ENCODE measurements at regions of chr2 and their contacts with region 1.

Region 1: DNA sequence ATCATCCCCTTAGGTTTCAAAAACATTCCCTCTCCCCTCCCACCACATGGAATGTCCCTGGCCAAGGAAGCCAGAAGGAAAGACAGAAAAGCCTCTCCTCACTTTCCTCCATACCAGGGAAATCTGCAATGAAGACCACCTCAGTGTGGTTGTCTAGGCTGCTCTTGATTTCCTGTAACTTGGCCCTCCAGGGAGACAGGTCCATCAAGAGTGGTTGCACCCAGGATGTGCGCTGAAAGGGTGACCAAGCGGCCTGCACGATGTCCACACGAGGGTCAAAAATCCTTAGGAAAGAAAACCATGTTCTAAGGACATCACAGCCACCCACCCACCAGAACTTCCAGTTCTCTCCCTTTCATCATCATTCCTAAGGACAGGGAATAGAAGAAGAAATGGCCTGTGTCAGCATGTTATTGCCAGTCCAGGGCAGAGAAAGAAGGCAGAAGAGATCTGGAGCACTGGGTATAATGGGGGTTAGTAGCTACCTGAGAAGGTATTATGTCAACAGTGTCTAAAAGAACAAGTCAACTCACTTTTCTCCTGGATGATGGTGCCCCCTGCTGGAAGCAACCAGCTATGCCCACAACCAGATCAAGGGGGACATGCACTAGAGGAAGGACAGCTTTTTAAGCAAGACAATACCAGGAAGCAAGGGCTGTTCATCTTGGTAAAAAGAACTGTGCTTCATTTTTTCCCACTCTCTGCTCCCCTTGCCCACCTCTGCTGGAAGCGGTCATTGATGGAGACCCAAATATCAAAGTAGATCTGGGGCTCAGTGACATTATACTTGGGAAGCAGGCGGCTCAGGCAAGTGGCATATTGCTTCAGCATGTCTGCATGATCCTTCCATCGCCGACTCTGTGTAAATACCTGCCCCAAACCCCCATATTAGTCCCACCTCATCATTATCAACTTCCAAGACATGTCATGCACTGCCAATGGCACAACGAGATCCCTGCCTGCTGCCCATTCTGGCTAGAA is 9.3 kb downstream of the GGCX start:
- DNase-seq: peak in 1 of 2 experiments; percentile 87
- ATAC-seq: peak; percentile 52 to 64
- H3K4me3 ChIP-seq: no peak overlapping the region
- H3K27ac ChIP-seq: peak overlapping the region; percentile 34 to 45; a peak in 5 of 6 replicates
- H3K4me1 ChIP-seq: peaks cover 10% of the 10 kb centered on the region
- CTCF ChIP-seq: peak; percentile 98
- EP300 ChIP-seq: no peak
- POLR2A ChIP-seq: no peak
- RAD21 ChIP-seq: peak; percentile 99 to 100

Region 2: DNA sequence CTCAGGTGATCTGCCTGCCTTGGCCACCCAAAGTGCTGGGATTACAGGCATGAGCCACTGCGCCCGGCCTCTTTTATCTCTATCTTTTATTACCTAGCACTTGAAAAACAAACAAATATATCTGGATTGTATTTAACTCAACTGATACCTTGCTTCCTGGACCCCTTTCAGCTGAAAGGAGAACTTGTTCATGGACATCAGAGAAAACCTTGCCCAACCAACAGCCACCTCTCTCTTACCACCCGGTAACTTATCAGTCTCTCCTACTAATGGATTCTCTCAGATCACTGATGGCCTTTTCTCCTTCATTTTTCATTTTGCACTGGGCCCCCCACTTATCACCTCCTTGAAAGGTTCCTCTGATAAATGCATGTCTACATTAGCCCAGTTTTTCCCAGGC is 204.4 kb before region 1 on chr2:
- CTCF ChIA-PET with region 1: interaction called, 12 read pairs
- POLR2A ChIA-PET with region 1: no interaction called
- DNase-seq: no peak
- ATAC-seq: no peak
- H3K4me3 ChIP-seq: no peak overlapping the region
- H3K27ac ChIP-seq: no peak overlapping the region
- H3K4me1 ChIP-seq: peaks cover 1% of the 10 kb centered on the region
- CTCF ChIP-seq: no peak
- EP300 ChIP-seq: no peak
- POLR2A ChIP-seq: no peak
- RAD21 ChIP-seq: no peak

Region 3: GRCh38 chr2:85385746-85386145 is 166.2 kb before region 1 on chr2:
- CTCF ChIA-PET with region 1: interaction called, 189 read pairs
- POLR2A ChIA-PET with region 1: no interaction called
- DNase-seq: no peak
- ATAC-seq: no peak
- H3K4me3 ChIP-seq: no peak overlapping the region
- H3K27ac ChIP-seq: no peak overlapping the region
- H3K4me1 ChIP-seq: no peaks in the 10 kb centered on the region
- CTCF ChIP-seq: no peak
- EP300 ChIP-seq: no peak
- POLR2A ChIP-seq: no peak
- RAD21 ChIP-seq: no peak

Region 4: GRCh38 chr2:85437488-85438284 is 114.3 kb before region 1 on chr2:
- CTCF ChIA-PET with region 1: interaction called, 1,185 read pairs
- POLR2A ChIA-PET with region 1: interaction called, 20 read pairs
- DNase-seq: peak; percentile 89
- ATAC-seq: peak; percentile 70 to 79
- H3K4me3 ChIP-seq: peak overlapping the region; percentile 33
- H3K27ac ChIP-seq: peak overlapping the region; percentile 91 to 95
- H3K4me1 ChIP-seq: peaks cover 61% of the 10 kb centered on the region
- CTCF ChIP-seq: no peak
- EP300 ChIP-seq: peak; percentile 61 to 78; a peak in 3 of 5 replicates
- POLR2A ChIP-seq: peak; percentile 40
- RAD21 ChIP-seq: peak in 1 of 2 experiments; percentile 57; a peak in 3 of 5 replicates

Region 5: GRCh38 chr2:85504778-85505323 is 47.1 kb before region 1 on chr2:
- CTCF ChIA-PET with region 1: interaction called, 10 read pairs
- POLR2A ChIA-PET with region 1: interaction called, 3 read pairs
- DNase-seq: peak; percentile 59 to 75
- ATAC-seq: peak; percentile 79 to 82
- H3K4me3 ChIP-seq: no peak overlapping the region
- H3K27ac ChIP-seq: peak overlapping the region; percentile 61 to 83
- H3K4me1 ChIP-seq: peaks cover 41% of the 10 kb centered on the region
- CTCF ChIP-seq: no peak; the same call in 2 of the 3 replicates
- EP300 ChIP-seq: no peak
- POLR2A ChIP-seq: no peak
- RAD21 ChIP-seq: 0 out of 5 replicates have a peak, but pooled peaks of 1 of the 2 experiments have one; percentile 14

Region 6: DNA sequence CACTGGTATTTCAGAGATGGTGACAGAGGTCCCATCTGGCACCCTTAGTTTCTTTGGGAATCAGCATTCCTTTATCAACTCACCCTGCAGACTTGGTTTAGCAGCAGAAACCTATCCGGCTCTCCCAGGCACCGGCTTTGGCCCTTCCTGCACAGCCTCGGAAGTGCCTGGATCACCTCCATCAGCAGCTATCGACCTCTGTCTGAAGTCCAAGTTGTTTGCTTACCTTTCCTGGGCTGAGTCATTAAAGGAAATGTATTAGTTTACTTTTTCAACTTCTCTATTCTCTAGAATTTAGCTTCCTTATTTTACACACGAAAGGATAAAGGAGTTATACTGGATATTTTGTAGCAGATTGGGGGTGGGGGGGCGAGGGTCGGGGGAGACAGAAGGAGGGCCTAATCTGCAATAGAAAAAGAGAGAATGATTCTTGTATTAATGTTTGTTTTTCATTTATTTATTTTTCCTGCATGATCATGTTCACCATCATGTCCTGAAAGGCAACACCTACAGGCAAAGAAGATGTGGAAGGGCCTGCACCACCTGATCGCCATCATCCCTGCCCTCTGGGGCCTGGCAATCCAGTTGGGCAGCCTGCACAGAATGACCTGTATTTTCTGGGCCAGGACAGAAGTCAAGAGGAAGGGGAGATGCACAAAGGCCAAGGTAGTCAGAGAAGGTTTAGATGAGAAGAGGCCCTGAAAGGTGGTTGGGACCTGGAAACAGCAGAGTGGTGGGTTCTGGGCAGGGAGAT is 35.2 kb before region 1 on chr2:
- CTCF ChIA-PET with region 1: interaction called, 11 read pairs
- POLR2A ChIA-PET with region 1: no interaction called
- DNase-seq: peak; percentile 40 to 72
- ATAC-seq: peak; percentile 88 to 91
- H3K4me3 ChIP-seq: no peak overlapping the region
- H3K27ac ChIP-seq: peak overlapping the region; percentile 64 to 81
- H3K4me1 ChIP-seq: peaks cover 32% of the 10 kb centered on the region
- CTCF ChIP-seq: no peak
- EP300 ChIP-seq: no peak
- POLR2A ChIP-seq: no peak
- RAD21 ChIP-seq: 0 out of 5 replicates have a peak, but pooled peaks have one; percentile 8 to 9

Measured in A549 (cell line).